Left cardiac atrium (tissue), 4 donors: ENCODE measurements at regions of chr6 and their contacts with region 1.

Region 1: DNA sequence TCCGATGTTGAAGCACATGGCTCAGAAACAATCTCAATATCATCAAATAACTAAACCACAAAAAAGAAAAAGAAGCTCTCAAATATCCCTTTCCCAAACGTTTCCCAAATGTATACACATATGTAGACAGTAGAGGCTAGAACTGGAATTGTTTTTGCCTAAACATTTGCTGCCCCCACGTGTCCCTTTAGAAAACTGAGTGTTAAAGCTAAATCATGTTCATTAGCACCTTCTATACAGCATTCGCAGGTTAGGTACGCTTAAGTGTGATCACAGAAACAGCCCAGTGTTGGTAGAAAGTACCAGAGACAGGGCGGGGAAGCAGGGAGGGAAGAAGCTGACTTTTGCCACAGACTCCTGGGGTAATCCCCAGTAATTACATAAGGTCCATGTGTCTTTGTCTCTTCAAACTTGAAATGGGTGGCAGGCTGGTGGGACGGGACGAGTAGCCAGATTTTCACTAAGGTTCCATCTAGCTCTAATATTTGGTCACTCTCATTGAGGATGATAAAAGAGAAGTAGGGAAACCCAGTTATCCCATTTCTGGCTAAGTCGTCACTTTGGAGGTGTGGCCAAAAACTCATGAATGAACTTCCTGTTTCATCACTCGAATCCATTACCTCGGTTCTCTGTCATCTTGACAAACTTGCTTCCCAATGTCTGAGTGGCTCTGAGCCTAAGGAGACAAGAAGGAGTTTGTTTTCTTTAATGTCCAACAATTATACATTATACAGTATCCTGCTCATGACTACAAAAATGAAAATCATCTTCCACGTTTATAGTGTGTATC is 15.0 kb upstream of the TFAP2A start:
- DNase-seq: no peak
- ATAC-seq: peak in 1 of 2 donors; percentile 61

Region 2: DNA sequence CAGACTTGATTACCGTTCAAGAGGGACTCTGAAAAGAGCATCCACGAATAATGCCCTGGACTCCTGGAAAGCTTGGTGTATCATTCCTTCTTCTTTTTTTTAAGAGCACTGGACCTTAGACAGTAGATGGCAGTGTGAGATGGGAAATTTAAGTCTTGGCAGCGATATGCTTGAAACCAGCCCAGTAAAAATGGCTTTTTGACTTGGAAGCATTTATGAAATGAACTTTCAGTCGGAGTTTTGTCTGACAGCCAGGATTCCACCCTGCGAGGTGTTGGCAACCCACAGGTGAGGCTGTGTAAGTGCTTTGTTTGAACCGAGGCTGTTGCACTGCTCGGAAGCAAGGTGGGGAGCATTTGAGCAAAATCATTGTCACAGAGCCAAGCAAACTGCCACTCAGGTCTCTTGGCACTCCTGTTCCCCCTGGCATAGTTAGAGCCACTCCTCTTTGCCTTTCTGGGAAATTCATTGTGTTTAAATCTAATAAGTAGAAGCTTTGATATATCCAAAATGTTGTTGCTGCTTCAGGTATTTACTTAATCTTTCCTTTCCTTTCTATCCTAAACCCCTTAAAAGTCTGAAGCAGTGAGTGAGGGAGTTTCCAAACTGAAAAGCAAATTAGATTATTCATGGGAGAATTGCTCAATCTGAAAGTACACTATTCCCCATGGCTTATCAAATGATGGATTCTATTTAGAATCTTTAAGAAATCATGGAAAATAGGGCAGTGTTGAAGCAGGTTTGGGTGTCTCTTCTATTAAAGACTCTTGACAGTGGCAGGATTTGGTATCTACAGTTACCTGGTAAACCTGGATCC is 1721.7 kb before region 1 on chr6:
- intact Hi-C with region 1: loop called in 1 of 2 experiments (anchors 10 kb)
- DNase-seq: no peak
- ATAC-seq: peak; percentile 74 to 77

Region 3: DNA sequence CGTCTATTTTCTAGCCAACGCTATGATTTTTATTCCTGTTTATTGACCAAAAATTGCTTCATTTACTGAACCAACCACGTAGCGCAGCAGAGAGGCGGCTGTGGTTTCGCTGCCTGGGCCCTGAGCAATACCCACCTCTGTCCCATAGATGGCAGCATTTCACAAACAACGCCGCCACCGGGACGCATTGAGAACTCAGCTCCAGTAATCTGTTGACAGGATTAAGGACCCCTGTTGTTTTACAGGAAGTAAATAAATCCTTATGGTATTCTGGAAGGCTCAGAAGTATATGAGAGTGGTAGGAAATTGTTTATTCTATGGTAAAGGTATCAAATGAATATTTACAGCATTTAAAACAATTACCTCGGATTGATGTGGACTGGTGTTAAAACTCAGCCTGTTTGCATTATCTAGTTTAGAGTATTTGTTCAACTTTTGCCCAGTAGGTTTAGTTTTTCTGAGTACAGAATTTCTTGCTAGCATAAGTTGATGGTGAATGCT is 1446.6 kb before region 1 on chr6:
- intact Hi-C with region 1: loop called (anchors 2 to 10 kb)
- DNase-seq: peak; percentile 48
- ATAC-seq: peak; percentile 80 to 86

Region 4: GRCh38 chr6:9250852-9251251 is 1179.0 kb before region 1 on chr6:
- intact Hi-C with region 1: loop called in 1 of 2 experiments (anchors 10 kb)
- DNase-seq: peak; percentile 21
- ATAC-seq: peak in 1 of 2 donors; percentile 27

Region 5: DNA sequence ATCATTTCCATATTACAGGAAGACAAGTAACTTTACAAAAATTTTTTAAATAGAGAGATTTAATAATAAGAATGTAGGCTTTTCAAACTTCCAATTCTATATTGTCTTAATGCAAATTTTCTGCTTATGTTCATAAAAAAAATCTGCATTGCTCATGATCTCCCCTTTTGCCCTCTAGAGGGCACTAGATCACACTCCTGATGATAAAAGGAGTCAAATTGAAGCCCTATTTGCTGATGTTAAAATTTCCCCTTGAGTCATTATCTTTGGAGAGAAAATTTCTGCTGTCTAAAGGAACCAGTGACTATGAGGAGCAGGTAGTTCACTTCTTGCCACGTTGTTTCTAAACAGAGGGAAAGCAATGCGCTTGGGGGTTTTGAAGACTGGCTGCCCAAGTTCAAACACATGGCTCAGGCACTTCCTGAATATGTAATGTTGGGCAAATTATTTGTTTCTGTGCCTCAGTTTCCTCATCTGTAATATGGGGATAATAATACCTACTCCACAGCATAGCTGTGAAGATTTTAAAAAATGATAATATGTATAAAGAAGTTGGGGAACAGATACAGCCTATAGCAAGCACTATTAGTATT is 889.2 kb before region 1 on chr6:
- intact Hi-C with region 1: loop called (anchors 5 to 10 kb)
- DNase-seq: no peak
- ATAC-seq: no peak

Region 6: DNA sequence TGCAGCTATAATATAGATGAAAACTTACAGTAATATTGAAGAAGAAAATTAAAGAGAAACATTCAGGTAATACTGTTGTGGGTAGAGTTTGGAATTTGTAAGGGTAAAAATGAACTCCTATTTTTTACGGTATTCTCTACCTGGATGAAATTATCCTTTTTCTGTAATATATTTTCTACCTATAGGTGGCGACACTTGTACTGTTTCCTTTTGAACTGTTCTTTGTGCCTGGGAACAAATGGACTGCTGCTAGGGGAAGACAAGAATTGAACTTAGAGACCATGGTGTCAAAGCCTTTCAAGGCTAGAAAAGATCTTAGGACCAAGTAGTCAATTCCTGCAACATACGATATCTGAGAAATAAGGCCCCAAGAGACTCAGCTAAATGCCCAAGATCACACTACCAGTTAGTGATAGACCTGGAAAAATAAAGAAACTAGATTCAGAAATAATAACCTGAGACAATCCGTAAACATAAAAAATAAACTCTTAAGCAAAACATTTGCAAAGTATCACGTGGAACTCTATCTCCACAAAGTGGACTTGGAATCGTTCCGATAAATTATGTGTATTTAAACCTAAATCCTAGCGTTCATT is 398.8 kb before region 1 on chr6:
- intact Hi-C with region 1: loop called in 1 of 2 experiments (anchors 5 kb)
- DNase-seq: no peak
- ATAC-seq: no peak

Region 7: GRCh38 chr6:10555625-10556309 is 125.9 kb after region 1 on chr6:
- intact Hi-C with region 1: no loop called
- DNase-seq: peak; percentile 79
- ATAC-seq: peak; percentile 94 to 95

Region 8: DNA sequence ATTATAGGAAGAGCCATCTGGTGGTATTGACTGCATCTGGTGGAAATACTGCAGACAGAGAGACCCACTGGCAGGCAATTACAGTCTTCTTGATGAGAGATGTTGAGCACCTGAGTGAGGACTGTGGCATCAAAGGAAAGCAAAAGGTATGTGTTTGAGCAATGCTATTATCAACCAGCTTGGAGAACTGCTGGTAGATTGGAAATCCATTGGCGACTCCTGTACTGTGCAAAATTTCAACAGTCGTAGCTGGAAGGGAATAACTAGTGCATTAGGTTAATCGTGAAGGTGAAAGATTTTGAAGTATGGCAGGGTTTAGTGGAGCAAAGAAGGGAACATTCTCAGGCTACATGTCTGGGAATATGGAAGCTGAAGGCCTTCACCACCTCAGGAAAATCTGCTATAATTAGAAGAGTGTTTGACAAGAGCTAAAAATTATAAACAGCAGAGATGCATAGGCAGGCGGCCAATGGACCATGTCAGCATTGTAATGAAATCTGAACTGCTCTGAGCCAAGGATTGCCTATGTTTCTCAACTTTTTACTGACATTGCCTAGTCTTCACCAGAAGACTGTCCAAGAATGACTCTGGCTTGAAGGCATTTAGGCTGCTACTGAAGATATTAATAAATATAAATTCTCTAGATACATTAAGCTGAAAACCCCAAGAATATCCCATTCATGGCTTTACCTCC is 180.3 kb after region 1 on chr6:
- intact Hi-C with region 1: no loop called
- DNase-seq: no peak
- ATAC-seq: peak; percentile 88